GM12878 (cell line): ENCODE measurements at regions of chrX and their contacts with region 1.

Region 1: GRCh38 chrX:115362334-115363095 is 73.0 kb downstream of the LUZP4 start:
- DNase-seq: no peak
- ATAC-seq: peak; percentile 91
- H3K4me3 ChIP-seq: no peak overlapping the region
- H3K27ac ChIP-seq: no peak overlapping the region
- H3K4me1 ChIP-seq: no peaks in the 10 kb centered on the region
- H3K27me3 ChIP-seq: no peaks in the 10 kb centered on the region; a peak in 1 of 4 replicates
- CTCF ChIP-seq: peak in 1 of 3 experiments; percentile 13; a peak in 1 of 6 replicates
- EP300 ChIP-seq: no peak
- POLR2A ChIP-seq: no peak
- RAD21 ChIP-seq: no peak

Region 2: GRCh38 chrX:115337491-115338144 is 24.9 kb before region 1 on chrX:
- CTCF ChIA-PET with region 1: interaction called, 12 read pairs
- POLR2A ChIA-PET with region 1: no interaction called
- RAD21 ChIA-PET with region 1: interaction called, 3 read pairs
- SMC1A ChIA-PET with region 1: interaction called, 11 read pairs
- in situ Hi-C with region 1: no loop called
- intact Hi-C with region 1: no loop called
- DNase-seq: no peak
- ATAC-seq: no peak
- H3K4me3 ChIP-seq: no peak overlapping the region
- H3K27ac ChIP-seq: no peak overlapping the region
- H3K4me1 ChIP-seq: no peaks in the 10 kb centered on the region
- H3K27me3 ChIP-seq: no peaks in the 10 kb centered on the region
- CTCF ChIP-seq: no peak
- EP300 ChIP-seq: no peak
- POLR2A ChIP-seq: no peak
- RAD21 ChIP-seq: no peak

Region 3: GRCh38 chrX:115413246-115413878 is 50.8 kb after region 1 on chrX:
- CTCF ChIA-PET with region 1: no interaction called
- POLR2A ChIA-PET with region 1: no interaction called
- RAD21 ChIA-PET with region 1: interaction called, 3 read pairs
- SMC1A ChIA-PET with region 1: no interaction called
- in situ Hi-C with region 1: no loop called
- intact Hi-C with region 1: loop called (anchors 5 kb)
- DNase-seq: no peak
- ATAC-seq: no peak
- H3K4me3 ChIP-seq: no peak overlapping the region
- H3K27ac ChIP-seq: no peak overlapping the region
- H3K4me1 ChIP-seq: no peaks in the 10 kb centered on the region
- H3K27me3 ChIP-seq: no peaks in the 10 kb centered on the region
- CTCF ChIP-seq: no peak
- EP300 ChIP-seq: no peak
- POLR2A ChIP-seq: no peak
- RAD21 ChIP-seq: no peak